AG04449 (cell line): ENCODE measurements at regions of chr12 and their contacts with region 1.

Region 1: GRCh38 chr12:100234598-100235304 is 32.1 kb downstream of the DEPDC4 start:
- DNase-seq: peak; percentile 31
- H3K4me3 ChIP-seq: no peak overlapping the region
- CTCF ChIP-seq: peak; percentile 55

Region 2: DNA sequence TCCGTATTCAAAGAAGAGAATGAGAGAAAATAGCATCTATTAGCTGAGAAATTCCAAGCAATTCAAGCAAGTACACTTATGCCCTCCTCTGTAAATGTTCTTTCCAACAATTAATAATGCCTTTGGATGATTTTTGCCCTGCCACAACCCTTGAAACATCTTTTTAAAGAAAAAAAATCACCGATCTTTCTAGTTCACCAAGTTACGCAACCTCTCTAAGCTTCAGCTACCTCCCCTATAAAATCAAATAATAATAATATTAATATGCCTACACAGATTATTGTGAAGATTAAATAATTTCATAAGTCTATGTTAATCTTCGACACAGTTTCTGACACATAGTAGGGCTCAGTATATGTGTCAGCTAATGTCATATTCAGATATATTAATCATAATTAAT is 13.0 kb after region 1 on chr12:
- CTCF ChIA-PET with region 1: interaction called, 30 read pairs
- POLR2A ChIA-PET with region 1: no interaction called
- DNase-seq: no peak
- H3K4me3 ChIP-seq: no peak overlapping the region
- CTCF ChIP-seq: no peak

Region 3: GRCh38 chr12:100404769-100405407 is 170.1 kb after region 1 on chr12:
- CTCF ChIA-PET with region 1: interaction called, 48 read pairs
- POLR2A ChIA-PET with region 1: no interaction called
- DNase-seq: no peak
- H3K4me3 ChIP-seq: no peak overlapping the region
- CTCF ChIP-seq: peak; percentile 49

Region 4: DNA sequence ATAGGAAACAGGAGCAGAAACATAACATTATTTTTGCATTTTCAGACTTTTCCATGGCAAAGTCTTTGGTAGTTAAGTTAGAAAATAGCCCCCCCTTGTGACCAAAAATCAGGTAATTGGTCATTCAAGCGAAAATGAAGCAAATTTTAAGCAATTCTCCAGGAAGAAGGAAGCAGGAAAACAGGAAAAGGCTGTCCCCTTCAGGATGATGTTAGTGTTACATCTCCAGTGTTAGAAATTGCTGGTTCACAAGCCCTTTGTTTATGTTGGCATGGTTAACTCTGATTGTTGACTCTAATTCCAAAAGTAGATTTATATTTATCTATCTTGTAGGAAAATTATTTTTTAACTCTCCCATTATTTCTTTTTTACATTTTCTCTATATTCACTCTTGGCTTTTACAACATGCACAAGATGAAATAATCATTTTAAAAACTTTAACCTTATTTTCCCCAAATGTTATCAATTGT is 319.9 kb after region 1 on chr12:
- CTCF ChIA-PET with region 1: interaction called, 73 read pairs
- POLR2A ChIA-PET with region 1: no interaction called
- DNase-seq: peak; percentile 63
- H3K4me3 ChIP-seq: no peak overlapping the region
- CTCF ChIP-seq: peak; percentile 73